ENCODE measurements at regions of chr1 and their contacts with region 1.

Region 1: DNA sequence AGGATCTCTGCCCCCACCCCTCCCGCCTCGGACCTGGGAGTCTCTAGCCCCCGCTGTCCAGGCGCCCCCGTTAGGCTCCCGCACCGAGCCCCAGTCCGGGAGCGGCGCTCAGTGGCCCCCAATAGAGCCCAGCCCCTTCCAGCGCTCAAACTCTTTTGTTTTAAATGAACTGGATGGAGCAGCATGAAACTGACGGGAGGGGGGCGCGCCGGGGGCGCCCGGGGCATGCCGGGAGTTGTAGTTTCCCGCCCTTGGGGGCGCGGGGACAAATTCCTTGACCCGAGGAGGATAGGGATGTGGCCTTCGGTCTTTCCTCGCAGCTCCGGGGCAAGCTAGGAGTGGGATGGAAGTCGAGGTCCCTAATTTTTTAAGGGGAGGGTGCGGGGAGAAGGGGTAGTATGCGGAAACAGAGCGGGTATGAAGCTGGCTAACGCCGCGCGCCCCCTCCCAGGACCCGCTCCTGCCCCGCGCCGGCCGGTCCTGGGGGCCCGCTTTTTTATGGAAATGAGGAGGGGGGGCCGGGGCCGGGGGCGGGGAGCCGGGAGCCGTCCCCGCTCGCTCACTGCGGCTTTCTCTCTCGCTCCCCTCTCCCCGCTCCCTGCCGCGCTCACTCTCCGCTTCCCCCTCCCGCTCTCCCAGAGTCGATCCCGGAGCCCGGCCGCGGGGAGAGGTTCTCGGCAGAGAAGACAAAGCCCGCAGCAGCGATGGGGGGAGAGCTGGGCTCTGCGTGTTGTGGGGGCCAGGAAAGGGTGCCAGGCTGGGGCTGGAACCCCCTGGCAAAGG is at the start of gene MEX3A:
- DNase-seq: peak; percentile 75 to 90 (median 88)
- ATAC-seq: peak; percentile 86 to 88
- H3K4me3 ChIP-seq: peak within 1 kb of the TSS; percentile 91
- H3K27ac ChIP-seq: no peak within 1 kb of the TSS
- H3K4me1 ChIP-seq: no peaks in the 10 kb centered on the region
- H3K27me3 ChIP-seq: no peaks in the 10 kb centered on the region
- total RNA-seq, gene MEX3A: 0.17 to 0.33 (median 0.19) TPM

Region 2: DNA sequence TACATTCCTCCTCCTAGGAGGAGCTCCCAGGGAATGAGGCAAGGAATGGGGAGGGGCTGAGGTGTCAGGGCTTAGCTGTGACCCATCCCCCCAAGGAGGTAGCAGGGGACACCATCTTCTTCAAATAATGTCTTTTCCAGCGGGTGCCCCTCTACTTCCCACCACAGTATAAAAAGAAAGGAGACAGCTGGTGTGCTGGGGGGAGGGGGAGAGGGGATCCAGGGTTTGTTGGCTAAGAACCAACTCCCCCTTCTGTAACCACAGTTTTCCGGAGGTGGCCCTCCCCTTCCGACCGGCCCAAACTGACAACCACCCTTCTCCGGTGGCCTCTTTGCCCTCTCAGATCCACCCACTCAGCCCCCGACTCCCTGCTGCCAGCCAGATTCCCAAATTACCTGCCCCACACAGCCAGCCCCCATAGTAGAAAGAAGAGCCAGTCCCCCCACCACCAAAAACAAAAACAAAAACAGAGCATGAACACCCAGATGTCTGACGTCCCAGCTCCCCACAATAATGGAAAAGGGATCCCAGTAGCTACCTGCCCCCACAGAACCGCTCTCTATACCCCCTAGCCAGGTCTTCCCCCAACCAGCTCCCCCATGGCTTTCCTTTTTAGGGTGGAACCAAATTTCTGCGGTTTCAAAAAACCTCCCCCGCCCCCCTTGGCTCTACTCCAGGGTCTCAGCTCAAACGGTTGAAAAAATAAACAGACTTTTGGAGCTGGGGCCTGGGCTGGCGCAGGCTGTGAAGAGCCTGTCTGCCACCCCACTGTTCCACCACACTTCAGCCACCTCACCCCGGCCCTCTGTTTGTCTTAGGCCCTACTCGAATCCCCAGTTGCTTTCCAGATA is 106.2 kb before region 1 on chr1:
- intact Hi-C with region 1: no loop called
- DNase-seq: peak; percentile 81 to 92 (median 88)
- ATAC-seq: no peak
- H3K4me3 ChIP-seq: peak overlapping the region; percentile 87
- H3K27ac ChIP-seq: peak overlapping the region; percentile 98
- H3K4me1 ChIP-seq: peaks cover 32% of the 10 kb centered on the region
- H3K27me3 ChIP-seq: no peaks in the 10 kb centered on the region

Region 3: DNA sequence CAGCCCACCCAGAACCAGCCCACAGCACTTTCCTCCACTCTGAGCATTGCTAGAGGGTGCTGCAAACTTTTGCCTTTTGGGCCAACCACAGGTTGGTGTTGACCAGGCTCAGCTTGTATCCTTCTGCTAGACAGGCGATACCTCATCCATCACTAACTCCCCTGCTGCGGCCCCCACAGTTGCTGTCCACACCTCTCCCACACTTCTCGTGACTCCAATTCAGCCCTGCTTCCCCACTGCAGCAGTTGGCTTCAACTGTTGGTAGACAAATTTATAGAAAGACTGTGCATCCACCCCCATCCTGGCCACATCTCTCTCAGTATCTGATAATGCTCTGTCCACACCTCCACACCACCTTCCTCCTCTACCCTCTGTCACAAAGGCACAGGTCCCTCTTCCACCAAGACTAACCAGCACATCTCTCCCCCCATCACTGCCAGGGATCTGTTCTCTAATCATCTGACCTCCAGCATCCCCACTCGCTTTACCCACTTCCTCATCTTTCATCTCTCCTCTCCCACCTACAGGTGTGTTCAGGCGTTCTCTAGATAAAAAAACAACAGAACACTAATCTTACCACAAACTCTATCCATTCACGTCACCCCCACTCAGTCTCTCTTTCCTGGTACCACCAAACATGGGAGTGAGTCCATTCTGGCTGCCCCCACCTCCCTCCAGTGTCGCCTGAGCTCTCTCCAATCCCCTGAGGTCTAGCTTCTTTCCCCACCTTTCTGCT is 95.6 kb after region 1 on chr1:
- intact Hi-C with region 1: no loop called
- DNase-seq: no peak
- ATAC-seq: no peak
- H3K4me3 ChIP-seq: no peak overlapping the region
- H3K27ac ChIP-seq: no peak overlapping the region
- H3K4me1 ChIP-seq: no peaks in the 10 kb centered on the region
- H3K27me3 ChIP-seq: no peaks in the 10 kb centered on the region

Region 4: GRCh38 chr1:156319664-156320063 is 237.2 kb after region 1 on chr1:
- intact Hi-C with region 1: loop called in 1 of 4 experiments (anchors 10 kb)
- DNase-seq: no peak
- ATAC-seq: no peak
- H3K4me3 ChIP-seq: no peak overlapping the region
- H3K27ac ChIP-seq: no peak overlapping the region
- H3K4me1 ChIP-seq: no peaks in the 10 kb centered on the region
- H3K27me3 ChIP-seq: no peaks in the 10 kb centered on the region

Measured in right cardiac atrium (tissue), 5 donors.